GM12878 (cell line): ENCODE measurements at regions of chr3 and their contacts with region 1.

Region 1: GRCh38 chr3:128794770-128795649 is 69.0 kb downstream of the RAB7A start:
- DNase-seq: no peak
- ATAC-seq: peak; percentile 98
- H3K4me3 ChIP-seq: no peak overlapping the region
- H3K27ac ChIP-seq: no peak overlapping the region
- H3K4me1 ChIP-seq: peaks cover 39% of the 10 kb centered on the region
- H3K27me3 ChIP-seq: no peaks in the 10 kb centered on the region
- CTCF ChIP-seq: peak; percentile 76 to 79 (median 79)
- EP300 ChIP-seq: no peak
- POLR2A ChIP-seq: no peak
- RAD21 ChIP-seq: peak; percentile 80

Region 2: DNA sequence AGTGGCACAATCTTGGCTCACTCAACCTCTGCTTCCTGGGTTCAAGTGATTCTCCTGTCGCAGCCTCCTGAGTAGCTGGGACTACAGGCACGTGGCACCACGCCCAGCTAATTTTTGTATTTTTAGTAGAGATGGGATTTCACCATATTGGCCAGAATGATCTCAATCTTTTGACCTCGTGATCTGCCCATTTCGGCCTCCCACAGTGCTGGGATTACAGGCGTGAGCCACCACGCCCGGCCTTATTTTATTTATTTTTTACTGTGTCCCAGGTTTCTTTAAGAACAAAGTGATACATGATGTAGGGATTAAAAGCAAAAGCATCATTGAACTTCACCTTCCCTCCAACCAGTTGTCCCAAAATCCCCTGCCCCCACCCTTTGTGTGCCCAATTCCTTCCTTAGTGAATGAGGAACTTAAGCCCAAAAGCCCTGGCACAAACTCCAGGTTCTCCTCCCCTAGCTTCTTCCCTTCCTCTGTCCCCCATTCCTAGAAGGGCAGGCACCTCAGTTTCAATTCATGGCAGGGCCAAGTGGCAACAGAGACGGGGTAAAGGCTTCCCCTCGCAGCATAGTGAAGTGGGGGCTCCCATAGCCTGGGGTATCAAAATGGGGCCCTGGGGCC is 120.7 kb before region 1 on chr3:
- CTCF ChIA-PET with region 1: interaction called, 244 read pairs
- POLR2A ChIA-PET with region 1: no interaction called
- RAD21 ChIA-PET with region 1: interaction called, 7 read pairs
- SMC1A ChIA-PET with region 1: interaction called, 21 read pairs
- in situ Hi-C with region 1: no loop called
- intact Hi-C with region 1: no loop called
- DNase-seq: no peak
- ATAC-seq: no peak
- H3K4me3 ChIP-seq: peak overlapping the region; percentile 72
- H3K27ac ChIP-seq: peak overlapping the region; percentile 92
- H3K4me1 ChIP-seq: peaks cover 12% of the 10 kb centered on the region
- H3K27me3 ChIP-seq: no peaks in the 10 kb centered on the region
- CTCF ChIP-seq: no peak
- EP300 ChIP-seq: no peak
- POLR2A ChIP-seq: no peak
- RAD21 ChIP-seq: no peak

Region 3: GRCh38 chr3:128780101-128780837 is 14.7 kb before region 1 on chr3:
- CTCF ChIA-PET with region 1: interaction called, 26 read pairs
- POLR2A ChIA-PET with region 1: no interaction called
- RAD21 ChIA-PET with region 1: interaction called, 5 read pairs
- SMC1A ChIA-PET with region 1: interaction called, 4 read pairs
- in situ Hi-C with region 1: no loop called
- intact Hi-C with region 1: no loop called
- DNase-seq: no peak
- ATAC-seq: no peak
- H3K4me3 ChIP-seq: no peak overlapping the region
- H3K27ac ChIP-seq: no peak overlapping the region
- H3K4me1 ChIP-seq: peaks cover 36% of the 10 kb centered on the region
- H3K27me3 ChIP-seq: no peaks in the 10 kb centered on the region
- CTCF ChIP-seq: no peak
- EP300 ChIP-seq: no peak
- POLR2A ChIP-seq: no peak
- RAD21 ChIP-seq: no peak